Sciatic nerve (tissue), 2 donors: ENCODE measurements at regions of chr20 and their contacts with region 1.

Region 1: GRCh38 chr20:57654363-57654997 is 34.3 kb upstream of the ZBP1 start:
- DNase-seq: peak; percentile 64
- ATAC-seq: peak; percentile 86

Region 2: GRCh38 chr20:58087193-58087858 is 432.8 kb after region 1 on chr20:
- intact Hi-C with region 1: loop called (anchors 10 kb)
- DNase-seq: peak; percentile 59
- ATAC-seq: no peak

Region 3: GRCh38 chr20:58179432-58180099 is 525.1 kb after region 1 on chr20:
- intact Hi-C with region 1: loop called (anchors 2 kb)
- DNase-seq: peak; percentile 83
- ATAC-seq: peak; percentile 66